Esophagus squamous epithelium (tissue), 5 donors: ENCODE measurements at regions of chr7 and their contacts with region 1.

Region 1: DNA sequence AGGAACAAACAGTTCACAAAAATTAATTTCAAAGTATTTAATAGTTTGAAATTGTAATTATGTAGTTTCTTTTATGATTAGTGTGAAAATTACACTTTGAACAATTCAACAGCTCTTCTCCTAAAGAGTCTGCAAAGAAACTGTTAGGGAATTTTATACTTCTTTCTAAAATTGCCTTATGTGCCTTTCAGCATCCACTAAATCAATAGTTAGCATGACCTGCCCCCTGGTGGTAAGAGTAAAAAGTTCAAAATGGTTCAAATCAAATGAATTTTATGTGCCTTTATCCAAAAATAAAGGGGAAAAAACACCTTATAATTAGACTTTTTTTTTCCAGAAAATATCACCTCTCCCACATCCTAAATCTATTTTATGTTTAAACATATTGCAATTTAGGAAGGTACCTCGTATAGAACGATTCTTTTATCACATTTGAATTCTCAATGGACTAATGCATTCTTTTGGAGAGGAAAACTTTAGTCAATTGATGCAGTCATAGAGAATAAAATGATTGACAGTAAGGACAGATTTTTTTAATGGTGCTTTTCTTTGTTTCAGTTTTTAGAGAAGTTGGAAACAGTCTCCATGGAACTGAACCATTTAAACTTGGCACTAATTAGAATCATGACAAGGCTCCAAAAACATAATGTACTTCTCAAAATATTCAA is 163.7 kb downstream of the SEMA3D start:
- DNase-seq: no peak
- H3K4me3 ChIP-seq: no peak overlapping the region
- H3K27ac ChIP-seq: no peak overlapping the region
- H3K4me1 ChIP-seq: peaks cover 0 to 16% (median 0%) of the 10 kb centered on the region in 3 donors
- H3K27me3 ChIP-seq: no peaks in the 10 kb centered on the region
- CTCF ChIP-seq: peak; percentile 53 to 84 (median 60)
- POLR2A ChIP-seq: no peak

Region 2: DNA sequence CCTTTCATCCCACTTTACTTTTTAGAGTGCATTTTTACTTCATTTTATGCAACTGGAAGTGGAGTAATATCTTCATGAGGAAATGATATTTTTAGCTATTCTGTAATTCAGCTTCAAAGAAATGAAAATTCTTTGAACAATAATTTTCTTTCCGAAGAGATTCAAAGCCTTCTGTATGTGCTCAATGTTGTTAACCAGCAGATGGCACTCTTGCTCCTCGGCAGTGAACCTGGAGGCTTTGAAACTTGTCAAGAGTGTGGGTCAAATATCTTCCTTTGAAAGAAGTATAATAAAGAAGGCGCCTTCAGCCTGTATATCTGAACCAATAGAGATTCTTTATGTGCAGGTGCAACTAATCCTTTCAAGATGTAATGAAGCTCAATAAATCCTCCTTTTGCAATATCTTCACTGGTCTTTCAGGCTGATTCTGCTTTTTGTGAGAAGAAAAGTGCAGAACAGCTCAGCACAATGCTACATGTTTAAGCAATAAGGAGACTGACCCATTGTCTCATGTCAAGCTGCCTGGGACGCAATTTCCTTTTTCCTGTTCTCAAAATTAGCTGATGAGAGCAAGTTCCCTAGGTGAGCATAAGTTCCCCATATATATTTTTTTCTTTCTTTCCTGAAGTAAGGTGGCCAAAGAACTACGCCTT is 1087.0 kb before region 1 on chr7:
- intact Hi-C with region 1: loop called (anchors 10 kb)
- DNase-seq: no peak
- H3K4me3 ChIP-seq: no peak overlapping the region
- H3K27ac ChIP-seq: no peak overlapping the region
- H3K4me1 ChIP-seq: no peaks in the 10 kb centered on the region
- H3K27me3 ChIP-seq: no peaks in the 10 kb centered on the region
- CTCF ChIP-seq: peak; percentile 34 to 76 (median 58)
- POLR2A ChIP-seq: no peak

Region 3: GRCh38 chr7:83970081-83970480 is 1053.1 kb before region 1 on chr7:
- intact Hi-C with region 1: loop called (anchors 5 kb)
- DNase-seq: no peak
- H3K4me3 ChIP-seq: no peak overlapping the region
- H3K27ac ChIP-seq: no peak overlapping the region
- H3K4me1 ChIP-seq: no peaks in the 10 kb centered on the region
- H3K27me3 ChIP-seq: no peaks in the 10 kb centered on the region
- CTCF ChIP-seq: no peak
- POLR2A ChIP-seq: no peak

Region 4: DNA sequence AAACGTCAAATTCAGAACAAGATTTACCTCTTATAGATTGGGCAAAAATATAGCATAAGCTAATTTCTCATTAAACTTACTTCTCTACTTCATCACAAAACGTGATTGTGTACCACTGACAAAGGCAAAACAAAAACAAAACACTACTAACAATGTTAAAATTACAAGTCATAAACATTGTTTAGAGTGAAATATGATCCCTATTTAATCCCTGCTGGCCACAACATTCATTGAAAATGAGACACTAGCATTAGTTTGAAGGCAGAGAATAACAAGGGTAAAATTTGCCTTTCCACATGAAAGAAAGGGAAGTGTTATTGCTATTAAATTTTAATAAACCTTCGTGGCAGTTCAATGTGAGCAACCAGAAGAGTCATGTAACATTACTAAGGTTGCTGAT is 873.6 kb before region 1 on chr7:
- intact Hi-C with region 1: no loop called
- DNase-seq: no peak
- H3K4me3 ChIP-seq: no peak overlapping the region
- H3K27ac ChIP-seq: peak overlapping the region in 1 of 4 donors; percentile 22
- H3K4me1 ChIP-seq: no peaks in the 10 kb centered on the region
- H3K27me3 ChIP-seq: no peaks in the 10 kb centered on the region
- CTCF ChIP-seq: no peak
- POLR2A ChIP-seq: no peak